ENCODE measurements at regions of chr7 and their contacts with region 1.

Region 1: DNA sequence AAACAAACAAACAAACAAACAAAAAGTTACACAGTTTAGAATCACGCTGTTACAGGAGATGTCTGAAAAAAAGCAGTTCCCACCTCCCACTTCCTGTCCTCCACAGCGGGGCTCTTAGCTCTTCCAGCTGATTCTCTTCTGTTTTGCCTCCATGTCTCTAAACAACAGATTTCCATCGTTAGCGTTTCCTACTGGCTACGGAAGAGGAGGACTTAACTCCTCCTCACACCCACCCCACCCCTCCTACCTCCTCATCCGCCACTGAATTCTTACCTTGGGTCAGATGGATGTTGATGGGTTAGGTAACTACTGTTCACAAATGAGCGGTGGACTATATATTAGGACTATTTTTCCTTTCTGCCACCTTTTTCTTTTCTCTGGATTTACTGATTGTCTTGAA is 36.8 kb upstream of the NUB1 start:
- DNase-seq: no peak
- ATAC-seq: no peak
- H3K4me3 ChIP-seq: peak overlapping the region in 2 of 12 donors; percentile 19 to 21
- H3K27ac ChIP-seq: no peak overlapping the region
- H3K4me1 ChIP-seq: peaks cover 0 to 12% (median 4%) of the 10 kb centered on the region in 12 donors
- H3K27me3 ChIP-seq: peaks cover 0 to 39% (median 13%) of the 10 kb centered on the region in 9 donors
- CTCF ChIP-seq: no peak
- POLR2A ChIP-seq: no peak

Region 2: GRCh38 chr7:151123822-151124464 is 180.9 kb before region 1 on chr7:
- intact Hi-C with region 1: loop called (anchors 1 to 5 kb)
- DNase-seq: peak; percentile 83 to 90 (median 85)
- ATAC-seq: peak; percentile 57 to 79 (median 74)
- H3K4me3 ChIP-seq: no peak overlapping the region
- H3K27ac ChIP-seq: no peak overlapping the region
- H3K4me1 ChIP-seq: peaks cover 0 to 32% (median 9%) of the 10 kb centered on the region in 12 donors
- H3K27me3 ChIP-seq: no peaks in the 10 kb centered on the region
- CTCF ChIP-seq: peak; percentile 96 to 99 (median 98)
- POLR2A ChIP-seq: no peak

Region 3: DNA sequence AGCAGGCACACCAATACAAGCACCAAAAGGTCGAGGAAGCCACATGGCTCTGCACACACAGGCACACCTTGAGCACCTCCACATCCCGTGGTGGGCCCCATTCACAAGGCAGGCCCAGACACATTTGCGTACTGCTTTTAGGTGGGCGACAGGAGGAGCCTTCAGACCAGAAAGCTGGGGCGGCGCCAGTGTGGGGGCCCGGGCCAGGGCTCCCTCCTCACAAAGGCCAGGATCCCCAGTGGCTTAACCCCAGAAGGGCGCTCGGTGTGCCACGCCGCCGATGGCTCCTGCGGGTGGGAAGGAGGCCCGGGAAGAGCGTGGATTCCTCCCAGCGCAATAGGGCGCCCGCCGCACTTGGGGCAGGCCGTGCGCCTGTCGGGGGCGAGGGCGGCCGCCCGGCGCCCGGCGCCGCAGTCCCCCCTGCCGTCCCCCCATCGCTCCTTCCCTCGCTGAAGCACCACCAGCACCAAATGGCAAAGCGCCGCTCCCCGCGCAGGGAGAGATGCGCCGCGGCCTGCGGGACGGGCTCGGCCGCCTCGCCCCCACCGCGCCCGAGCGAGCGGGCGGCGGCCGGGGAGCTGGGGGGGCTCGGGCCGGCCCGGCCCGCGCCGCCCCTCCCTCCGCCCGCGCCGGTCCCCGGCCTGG is 53.4 kb before region 1 on chr7:
- intact Hi-C with region 1: loop called in 5 of 10 experiments (anchors 2 to 5 kb)
- DNase-seq: peak in 4 of 5 donors; percentile 65 to 78 (median 74)
- ATAC-seq: peak in 1 of 4 donors; percentile 6
- H3K4me3 ChIP-seq: peak overlapping the region; percentile 6 to 88 (median 73)
- H3K27ac ChIP-seq: peak overlapping the region; percentile 86 to 100 (median 97)
- H3K4me1 ChIP-seq: peaks cover 0 to 75% (median 50%) of the 10 kb centered on the region in 12 donors
- H3K27me3 ChIP-seq: peaks cover 0 to 43% (median 0%) of the 10 kb centered on the region in 9 donors
- CTCF ChIP-seq: no peak
- POLR2A ChIP-seq: no peak

Region 4: DNA sequence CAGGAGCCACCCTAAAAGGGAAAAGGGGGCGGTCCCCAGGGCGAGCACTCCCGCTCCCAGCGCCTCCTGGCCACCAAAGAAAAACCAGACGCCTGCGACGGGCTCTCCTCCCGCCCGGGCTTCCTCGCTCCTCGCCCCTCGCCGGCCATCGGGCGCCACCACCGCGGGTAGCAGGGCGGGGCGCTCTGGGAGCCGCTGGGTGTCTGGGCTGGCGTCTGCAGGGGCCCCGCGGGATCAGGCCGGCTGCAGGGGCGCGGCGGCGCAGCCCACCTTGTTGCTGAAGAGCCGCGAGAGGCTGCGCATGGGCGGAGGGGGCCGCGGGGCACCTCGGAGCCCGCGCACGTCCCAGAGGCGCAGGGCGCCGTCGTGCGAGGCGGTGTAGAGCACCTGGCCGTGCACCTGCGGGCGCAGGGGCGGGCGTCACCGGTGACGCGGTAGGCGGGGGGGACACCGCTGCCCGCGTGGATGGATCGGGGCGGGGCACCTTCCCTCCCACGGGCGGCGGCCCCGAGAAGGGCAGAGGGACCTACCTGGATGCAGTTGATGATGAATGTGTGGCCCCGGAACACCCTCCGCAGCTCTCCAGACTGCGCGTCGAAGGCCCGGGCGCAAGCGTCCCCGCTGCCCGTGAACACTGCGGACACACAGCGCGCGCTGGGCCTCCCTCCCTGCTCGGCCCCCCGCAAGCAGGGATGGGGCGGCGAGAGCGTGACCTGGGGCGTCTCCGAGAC is 76.7 kb after region 1 on chr7:
- intact Hi-C with region 1: no loop called
- DNase-seq: peak in 2 of 5 donors; percentile 18 to 69
- ATAC-seq: peak in 1 of 4 donors; percentile 28
- H3K4me3 ChIP-seq: peak overlapping the region; percentile 13 to 47 (median 40)
- H3K27ac ChIP-seq: no peak overlapping the region
- H3K4me1 ChIP-seq: peaks cover 0 to 21% (median 13%) of the 10 kb centered on the region in 12 donors
- H3K27me3 ChIP-seq: peaks cover 6 to 41% (median 19%) of the 10 kb centered on the region in 9 donors
- CTCF ChIP-seq: no peak
- POLR2A ChIP-seq: no peak

Measured in heart left ventricle (tissue), 16 donors.